AG04450 (cell line): ENCODE measurements at regions of chr10 and their contacts with region 1.

Region 1: DNA sequence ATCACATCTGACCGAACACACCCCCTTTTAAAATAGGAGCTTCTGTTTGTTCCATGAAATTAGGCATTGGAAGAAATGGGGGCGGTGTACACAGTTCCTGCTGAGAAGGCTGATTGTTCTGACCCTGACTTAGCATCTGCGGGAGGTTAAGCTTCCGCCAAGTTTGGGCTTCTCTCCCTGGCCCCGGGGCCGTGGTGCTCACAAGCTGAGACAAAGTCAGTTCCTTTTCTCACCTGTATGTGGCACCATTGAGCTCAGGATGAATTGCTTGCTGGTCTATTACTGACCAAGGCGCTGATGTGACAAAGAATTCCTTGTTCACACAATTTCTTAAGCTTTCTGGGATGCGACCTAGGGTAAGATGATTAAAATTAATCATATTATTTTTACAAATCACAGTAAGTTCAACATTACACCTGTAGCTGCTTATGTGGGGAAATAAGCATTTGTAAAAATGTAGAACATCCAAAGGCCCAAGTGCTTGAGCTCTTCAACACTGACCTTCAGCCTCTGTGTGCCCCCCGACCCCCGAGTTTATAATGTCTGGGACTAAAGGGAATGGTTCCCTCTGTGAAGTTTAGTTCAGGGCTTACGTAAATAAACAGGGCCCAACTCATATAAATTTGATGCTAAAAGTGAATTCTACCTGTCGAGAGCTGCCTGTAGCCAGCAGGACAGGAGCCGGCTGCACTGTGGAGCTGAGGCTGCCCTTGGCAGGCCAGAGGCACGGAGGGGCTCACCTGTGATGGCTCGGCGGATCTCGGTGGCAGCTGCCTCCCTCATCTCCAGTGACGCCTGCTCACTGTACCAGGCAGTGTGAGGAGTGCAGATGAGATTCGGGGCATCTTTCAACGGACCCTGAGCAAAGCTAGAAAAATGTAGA is 50.8 kb downstream of the ZRANB1 start:
- DNase-seq: peak; percentile 15
- H3K4me3 ChIP-seq: no peak overlapping the region
- H3K27ac ChIP-seq: no peak overlapping the region
- H3K27me3 ChIP-seq: no peaks in the 10 kb centered on the region
- CTCF ChIP-seq: peak; percentile 62

Region 2: DNA sequence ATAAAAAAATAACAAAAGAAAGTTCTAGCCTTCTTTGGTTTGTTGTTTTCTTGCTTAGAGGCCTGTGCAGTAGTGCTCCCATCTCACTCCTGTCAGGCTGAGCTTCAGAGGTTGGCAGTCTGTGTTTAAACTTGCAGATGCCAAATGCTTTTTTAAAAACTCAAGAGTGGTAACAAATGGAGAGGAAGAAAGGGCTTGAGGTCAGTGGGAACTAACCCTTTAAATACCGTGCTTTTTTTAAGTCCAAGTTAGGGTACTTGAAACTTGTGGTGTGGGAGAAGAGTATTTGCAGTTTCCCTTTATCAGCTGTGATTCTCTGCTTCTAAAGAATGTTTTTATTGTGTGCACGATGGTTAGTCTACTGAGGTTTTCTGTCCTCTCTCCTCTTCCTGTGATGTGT is 21.4 kb before region 1 on chr10:
- CTCF ChIA-PET with region 1: interaction called, 14 read pairs
- POLR2A ChIA-PET with region 1: no interaction called
- DNase-seq: no peak
- H3K4me3 ChIP-seq: no peak overlapping the region
- H3K27ac ChIP-seq: no peak overlapping the region
- H3K27me3 ChIP-seq: no peaks in the 10 kb centered on the region
- CTCF ChIP-seq: no peak

Region 3: DNA sequence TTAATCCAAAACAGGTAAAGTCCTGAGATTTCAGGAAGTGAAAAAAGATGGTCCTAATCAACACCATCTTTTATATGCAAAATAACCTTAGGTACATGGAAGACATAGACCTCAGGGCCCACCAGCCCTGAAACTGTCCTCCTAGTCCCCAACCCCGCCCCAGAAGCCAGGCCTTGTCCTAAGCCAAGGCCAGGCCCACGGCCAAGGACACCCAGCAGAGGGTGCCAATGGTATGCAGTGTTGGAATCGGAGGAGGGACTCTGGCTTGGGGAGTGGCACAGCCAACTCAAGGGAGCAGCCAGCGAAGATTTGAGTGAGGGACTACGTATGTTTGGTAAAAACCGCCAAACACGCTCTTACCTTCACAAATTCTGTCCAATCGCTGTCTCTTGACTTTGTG is 45.9 kb after region 1 on chr10:
- CTCF ChIA-PET with region 1: interaction called, 10 read pairs
- POLR2A ChIA-PET with region 1: no interaction called
- DNase-seq: no peak
- H3K4me3 ChIP-seq: no peak overlapping the region
- H3K27ac ChIP-seq: no peak overlapping the region
- H3K27me3 ChIP-seq: no peaks in the 10 kb centered on the region
- CTCF ChIP-seq: 0 out of 2 replicates have a peak, but pooled peaks have one; percentile 6

Region 4: DNA sequence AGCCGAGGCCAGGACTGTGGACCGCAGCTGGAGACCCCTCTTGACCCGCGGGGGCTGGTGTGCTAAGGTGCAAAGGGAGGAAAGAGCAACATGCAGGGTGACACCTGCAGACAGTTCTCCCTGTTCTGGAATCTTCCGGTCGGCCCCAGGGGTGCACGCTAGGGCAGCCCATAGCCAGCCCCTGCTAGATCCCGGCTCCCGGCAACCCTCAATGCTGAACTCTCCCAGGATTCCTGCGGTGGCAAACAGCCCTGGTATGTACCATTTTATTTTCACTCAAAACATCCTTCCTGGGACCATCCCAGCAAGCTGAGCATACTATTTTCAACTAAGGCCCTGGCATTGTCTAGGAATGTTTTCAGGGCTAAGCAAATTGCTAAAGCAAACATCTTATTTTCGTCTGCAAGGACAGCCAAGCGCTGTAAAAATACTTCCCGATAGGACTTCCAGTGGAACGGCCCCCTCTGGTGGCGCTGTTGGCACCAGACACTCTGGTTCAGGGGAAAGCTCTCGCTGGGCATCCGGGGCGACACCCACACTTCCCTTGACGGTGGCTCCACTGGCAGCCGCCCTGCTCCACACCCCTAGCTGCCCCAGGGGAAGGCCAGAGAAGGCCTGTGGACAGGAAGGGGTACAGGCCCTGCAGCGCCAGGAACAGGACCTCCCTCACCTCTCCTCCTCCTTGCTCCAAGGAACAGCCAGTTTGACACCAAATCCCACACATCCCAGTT is 68.3 kb after region 1 on chr10:
- CTCF ChIA-PET with region 1: interaction called, 16 read pairs
- POLR2A ChIA-PET with region 1: no interaction called
- DNase-seq: peak; percentile 56
- H3K4me3 ChIP-seq: no peak overlapping the region
- H3K27ac ChIP-seq: peak overlapping the region; percentile 70
- H3K27me3 ChIP-seq: no peaks in the 10 kb centered on the region
- CTCF ChIP-seq: peak; percentile 81